Activated CD8-positive, alpha-beta memory T cell treated with anti-CD3 and anti-CD28 coated beads, Interleukin-2, amount 10 ng/mL, durations not matched to agents 7 days and 5 days (primary cell): ENCODE measurements at regions of chr5 and their contacts with region 1.

Region 1: DNA sequence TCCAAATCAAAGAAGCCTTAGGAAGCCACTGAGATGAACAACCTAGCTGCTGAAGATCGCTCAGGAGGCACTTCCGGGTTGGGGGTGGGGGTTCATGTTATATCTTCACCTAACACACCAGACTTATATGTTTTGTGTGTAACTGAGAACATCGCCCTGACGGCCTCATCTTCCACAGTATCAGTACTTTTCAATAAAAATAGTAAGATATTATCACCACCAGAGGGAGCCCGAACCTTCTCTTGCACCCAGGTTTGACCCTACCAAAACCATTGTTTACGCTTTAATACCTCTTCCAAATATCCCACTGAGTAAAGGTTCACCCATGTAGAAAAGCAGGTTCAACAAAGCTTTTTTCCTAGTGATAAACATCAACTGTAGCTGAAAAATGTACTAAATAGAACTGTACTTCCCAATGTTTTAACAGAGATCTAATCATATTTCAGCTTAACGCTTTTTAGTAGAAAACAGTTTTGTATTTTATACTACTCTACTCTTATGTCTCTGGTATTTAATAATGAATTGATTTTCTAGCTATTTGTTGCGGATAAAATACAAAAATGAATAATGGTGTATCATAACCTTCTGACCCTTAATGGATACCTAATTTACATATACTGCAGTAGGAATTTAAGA is 244.0 kb downstream of the EPB41L4A start:
- DNase-seq: peak; percentile 52
- ATAC-seq: peak; percentile 80
- H3K4me3 Mint-ChIP-seq: no peak overlapping the region
- H3K27ac Mint-ChIP-seq: no peak overlapping the region
- H3K4me1 Mint-ChIP-seq: no peaks in the 10 kb centered on the region
- H3K27me3 Mint-ChIP-seq: peaks cover 11% of the 10 kb centered on the region

Region 2: DNA sequence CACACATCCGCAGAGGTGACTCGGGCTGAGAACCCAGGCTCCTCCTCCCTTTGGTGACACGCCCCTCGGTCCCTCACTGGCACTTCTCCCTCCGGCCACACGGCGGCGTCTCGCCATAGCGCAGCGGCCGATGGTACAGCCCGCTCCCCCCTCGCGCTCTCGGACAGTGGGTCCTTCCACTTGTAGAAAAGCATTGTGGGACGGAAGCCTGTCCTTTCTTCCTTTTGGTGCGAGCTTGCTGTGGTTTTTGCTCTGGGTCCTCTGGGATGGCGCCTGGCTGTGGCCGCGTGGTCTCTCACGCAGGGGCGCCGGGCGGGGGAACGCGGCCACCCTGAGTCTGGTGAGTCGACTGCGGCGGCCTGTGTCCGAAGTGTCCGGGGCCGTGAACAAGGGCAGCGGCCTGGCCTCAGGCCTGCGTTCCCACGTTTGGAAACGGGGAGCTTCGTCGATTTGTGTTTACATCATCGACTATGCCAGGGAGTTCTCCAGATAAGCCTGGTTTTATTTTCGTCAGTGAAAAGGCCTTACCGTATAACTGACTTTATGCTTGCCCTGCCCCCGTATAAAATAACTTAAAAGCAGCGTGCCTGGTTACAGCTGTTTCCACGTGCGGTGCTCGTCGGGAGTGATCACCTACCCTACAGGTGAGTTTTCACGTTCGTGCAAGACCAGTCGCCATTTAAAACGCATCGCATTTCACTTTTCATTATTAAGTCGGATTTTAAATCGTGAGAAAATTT is 14.3 kb before region 1 on chr5:
- CTCF ChIA-PET with region 1: interaction called, 38 read pairs
- DNase-seq: peak; percentile 93
- ATAC-seq: peak; percentile 92
- H3K4me3 Mint-ChIP-seq: peak overlapping the region; percentile 91
- H3K27ac Mint-ChIP-seq: peak overlapping the region; percentile 83
- H3K4me1 Mint-ChIP-seq: peaks cover 24% of the 10 kb centered on the region
- H3K27me3 Mint-ChIP-seq: peaks cover 4% of the 10 kb centered on the region

Region 3: GRCh38 chr5:112419986-112420864 is 245.1 kb after region 1 on chr5:
- CTCF ChIA-PET with region 1: interaction called, 17 read pairs
- DNase-seq: peak; percentile 70
- ATAC-seq: peak; percentile 80
- H3K4me3 Mint-ChIP-seq: peak overlapping the region; percentile 69
- H3K27ac Mint-ChIP-seq: no peak overlapping the region
- H3K4me1 Mint-ChIP-seq: peaks cover 15% of the 10 kb centered on the region
- H3K27me3 Mint-ChIP-seq: peaks cover 61% of the 10 kb centered on the region